ENCODE measurements at regions of chr3 and their contacts with region 1.

Region 1: DNA sequence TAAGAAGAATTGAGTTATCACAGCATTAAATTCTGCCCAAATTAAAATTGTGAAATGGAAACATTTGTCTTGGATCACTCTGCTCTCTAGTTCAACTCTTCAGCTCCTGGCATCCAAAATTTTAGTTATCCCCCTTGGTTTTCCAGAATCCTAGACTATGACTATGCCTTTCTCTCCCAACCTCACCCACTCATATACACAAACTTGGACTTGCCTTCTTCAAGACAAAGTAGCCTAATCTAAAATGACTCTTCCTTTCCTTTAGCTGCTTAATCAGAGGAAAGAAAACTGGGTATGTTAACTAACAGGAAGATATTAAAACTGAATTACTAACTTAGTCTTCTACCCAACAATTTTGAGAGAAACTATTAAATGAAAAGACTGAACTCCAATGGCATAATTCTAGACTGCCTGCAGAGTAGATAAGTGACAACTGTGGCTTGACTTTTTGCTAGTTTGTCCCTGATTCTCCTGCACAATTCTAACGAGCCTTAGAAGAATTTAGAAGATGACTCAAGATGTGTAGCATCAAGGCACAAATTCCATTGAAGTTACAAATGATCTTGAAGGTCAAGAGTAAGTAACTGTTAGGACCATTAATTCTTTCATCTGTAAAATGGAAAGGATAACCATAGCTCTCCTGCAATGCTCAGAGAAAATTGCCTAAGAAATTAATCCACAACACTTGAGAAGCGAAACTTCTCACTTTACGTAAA is 5.2 kb upstream of the GOLIM4 start:
- DNase-seq: no peak
- H3K4me3 ChIP-seq: no peak overlapping the region
- H3K27ac ChIP-seq: no peak overlapping the region
- H3K4me1 ChIP-seq: peaks cover 4 to 9% (median 7%) of the 10 kb centered on the region in 4 donors
- H3K27me3 ChIP-seq: no peaks in the 10 kb centered on the region
- CTCF ChIP-seq: no peak
- EP300 ChIP-seq: no peak
- POLR2A ChIP-seq: no peak

Region 2: DNA sequence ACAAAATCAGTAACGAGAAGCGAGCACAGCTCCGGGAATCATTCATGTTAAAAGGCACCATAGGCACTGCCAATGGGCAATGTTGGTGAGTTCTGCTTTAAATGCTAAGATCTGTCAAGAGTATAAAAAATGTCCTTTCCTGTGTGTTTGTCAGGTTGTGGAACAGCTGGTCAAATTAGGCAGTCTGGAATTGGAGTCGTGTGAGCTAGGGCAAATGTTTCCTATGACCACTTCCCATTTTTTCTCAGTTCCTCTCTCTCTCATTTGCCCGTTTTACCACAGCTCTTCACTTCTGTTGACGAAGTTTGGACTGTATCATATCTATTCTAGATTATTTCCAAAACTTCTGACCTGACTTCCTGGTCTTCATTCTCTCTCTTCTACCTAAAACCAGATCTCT is 55.5 kb after region 1 on chr3:
- intact Hi-C with region 1: loop called (anchors 10 kb)
- DNase-seq: peak in 1 of 2 donors; percentile 20
- H3K4me3 ChIP-seq: no peak overlapping the region
- H3K27ac ChIP-seq: no peak overlapping the region
- H3K4me1 ChIP-seq: peaks cover 0 to 5% (median 0%) of the 10 kb centered on the region in 4 donors
- H3K27me3 ChIP-seq: no peaks in the 10 kb centered on the region
- CTCF ChIP-seq: no peak
- EP300 ChIP-seq: no peak
- POLR2A ChIP-seq: no peak

Region 3: DNA sequence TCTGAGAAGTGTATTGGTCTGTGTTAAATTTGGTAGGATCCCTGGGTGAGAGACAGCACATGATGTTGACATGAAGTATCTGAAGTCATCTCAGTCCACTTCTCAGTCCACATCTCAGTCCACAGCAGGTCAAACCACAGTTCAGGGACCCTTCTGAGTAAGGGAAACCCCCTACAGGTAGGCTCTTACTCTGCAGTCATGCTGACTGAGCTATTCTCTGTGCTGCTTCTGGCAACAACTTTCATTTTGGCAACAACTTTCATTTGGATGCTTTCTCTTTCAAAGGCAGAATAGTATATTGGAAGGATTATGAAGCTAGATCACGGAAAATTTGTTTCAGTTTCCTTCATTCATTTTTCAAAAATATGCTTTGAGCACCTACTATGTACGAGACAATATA is 173.0 kb after region 1 on chr3:
- intact Hi-C with region 1: no loop called
- DNase-seq: no peak
- H3K4me3 ChIP-seq: no peak overlapping the region
- H3K27ac ChIP-seq: no peak overlapping the region
- H3K4me1 ChIP-seq: no peaks in the 10 kb centered on the region
- H3K27me3 ChIP-seq: no peaks in the 10 kb centered on the region
- CTCF ChIP-seq: no peak
- EP300 ChIP-seq: no peak
- POLR2A ChIP-seq: no peak

Measured in stomach (tissue), 19 donors.